ENCODE measurements at regions of chr6 and their contacts with region 1.

Region 1: GRCh38 chr6:292506-293192 is 362 bp downstream of the DUSP22 start:
- DNase-seq: no peak
- H3K4me3 ChIP-seq: peak overlapping the region; percentile 72
- H3K27ac ChIP-seq: peak overlapping the region; percentile 77
- H3K27me3 ChIP-seq: peaks cover 3% of the 10 kb centered on the region
- CTCF ChIP-seq: no peak

Region 2: DNA sequence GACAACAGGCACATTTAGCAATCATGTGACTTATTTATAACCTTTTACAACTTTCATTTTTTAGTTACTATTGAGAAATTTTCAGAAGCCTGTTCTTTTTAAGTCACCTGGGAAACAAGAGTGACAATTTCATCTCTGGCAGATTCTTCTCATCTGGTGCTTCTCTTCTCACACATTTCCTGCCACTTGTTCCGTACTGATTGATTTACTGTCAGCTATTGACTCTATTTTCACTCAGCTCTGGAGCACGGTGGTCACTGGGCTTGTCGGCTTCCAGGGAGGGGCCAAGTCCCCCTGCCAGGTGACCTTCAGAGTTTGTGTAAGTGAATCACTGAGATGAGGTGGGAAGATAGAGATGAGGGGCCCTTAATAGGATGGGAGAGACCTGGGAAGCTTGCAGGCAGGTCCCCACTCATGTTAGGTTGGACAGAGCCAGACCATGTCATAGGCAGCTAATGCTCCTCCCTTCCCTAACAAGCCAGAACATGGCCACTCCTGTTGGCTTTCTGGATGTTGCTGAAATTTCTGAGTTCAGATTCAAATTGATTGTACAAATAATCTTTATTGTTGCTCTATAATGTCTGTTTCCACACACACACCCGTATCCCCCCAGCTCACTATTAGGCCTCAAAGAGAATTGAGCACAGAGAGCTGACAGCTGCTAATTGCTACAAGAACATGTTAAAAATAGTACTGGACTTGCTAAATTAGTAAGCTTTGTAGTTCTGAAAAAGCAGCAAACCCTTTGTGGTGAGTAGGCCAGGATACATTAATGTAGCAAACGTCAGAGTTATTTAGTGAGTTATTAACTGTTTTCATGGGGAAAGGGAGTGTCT is 12.9 kb after region 1 on chr6:
- CTCF ChIA-PET with region 1: interaction called, 3 read pairs
- POLR2A ChIA-PET with region 1: interaction called, 13 read pairs
- DNase-seq: no peak
- H3K4me3 ChIP-seq: no peak overlapping the region
- H3K27ac ChIP-seq: no peak overlapping the region
- H3K27me3 ChIP-seq: no peaks in the 10 kb centered on the region
- CTCF ChIP-seq: no peak